WTC11 (cell line): ENCODE measurements at regions of chr12 and their contacts with region 1.

Region 1: DNA sequence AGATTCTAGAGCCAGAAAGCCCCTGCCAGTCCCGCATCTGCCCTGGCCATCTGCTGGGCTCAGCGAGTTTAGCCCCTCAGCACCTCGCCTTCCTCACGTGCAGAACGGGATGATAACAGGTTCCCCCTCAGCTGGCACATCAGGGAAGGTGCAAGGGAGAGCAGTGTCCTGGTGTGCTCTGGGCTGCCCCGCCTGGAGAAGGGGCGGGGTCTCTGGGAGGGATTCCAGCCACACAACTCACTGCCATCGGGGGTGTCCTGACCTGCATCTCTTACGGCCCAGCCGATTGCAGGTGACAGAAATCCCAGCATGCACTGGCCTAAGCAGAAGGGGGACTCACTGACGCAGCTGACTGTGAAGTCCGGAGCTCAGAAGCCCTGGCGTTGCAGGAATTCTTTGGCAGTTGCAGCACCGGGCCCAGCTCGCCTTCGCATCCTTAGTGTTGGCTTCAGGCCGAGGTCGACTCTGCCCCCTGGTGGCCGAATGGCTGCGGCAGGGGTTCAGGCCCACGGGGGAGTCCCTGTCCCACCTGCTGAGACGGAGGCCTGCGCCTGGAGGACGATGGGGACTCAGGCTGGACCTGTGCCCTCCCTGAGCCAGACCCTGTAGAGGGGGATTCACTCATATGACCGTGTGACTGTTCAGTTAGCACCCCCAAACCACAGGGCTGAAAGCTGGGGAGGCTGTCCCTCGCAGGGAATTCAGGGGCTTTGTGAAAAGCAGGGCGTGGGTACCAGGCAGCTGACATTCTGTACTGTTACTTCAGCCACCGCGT is 178.6 kb downstream of the ADGRD1 start:
- DNase-seq: peak; percentile 94
- ATAC-seq: peak; percentile 88
- H3K4me3 Mint-ChIP-seq: peak overlapping the region; percentile 38; the same call in 1 of the 2 replicates
- H3K27ac Mint-ChIP-seq: no peak overlapping the region
- H3K4me1 Mint-ChIP-seq: no peaks in the 10 kb centered on the region
- H3K27me3 Mint-ChIP-seq: no peaks in the 10 kb centered on the region
- CTCF ChIP-seq: peak; percentile 88

Region 2: DNA sequence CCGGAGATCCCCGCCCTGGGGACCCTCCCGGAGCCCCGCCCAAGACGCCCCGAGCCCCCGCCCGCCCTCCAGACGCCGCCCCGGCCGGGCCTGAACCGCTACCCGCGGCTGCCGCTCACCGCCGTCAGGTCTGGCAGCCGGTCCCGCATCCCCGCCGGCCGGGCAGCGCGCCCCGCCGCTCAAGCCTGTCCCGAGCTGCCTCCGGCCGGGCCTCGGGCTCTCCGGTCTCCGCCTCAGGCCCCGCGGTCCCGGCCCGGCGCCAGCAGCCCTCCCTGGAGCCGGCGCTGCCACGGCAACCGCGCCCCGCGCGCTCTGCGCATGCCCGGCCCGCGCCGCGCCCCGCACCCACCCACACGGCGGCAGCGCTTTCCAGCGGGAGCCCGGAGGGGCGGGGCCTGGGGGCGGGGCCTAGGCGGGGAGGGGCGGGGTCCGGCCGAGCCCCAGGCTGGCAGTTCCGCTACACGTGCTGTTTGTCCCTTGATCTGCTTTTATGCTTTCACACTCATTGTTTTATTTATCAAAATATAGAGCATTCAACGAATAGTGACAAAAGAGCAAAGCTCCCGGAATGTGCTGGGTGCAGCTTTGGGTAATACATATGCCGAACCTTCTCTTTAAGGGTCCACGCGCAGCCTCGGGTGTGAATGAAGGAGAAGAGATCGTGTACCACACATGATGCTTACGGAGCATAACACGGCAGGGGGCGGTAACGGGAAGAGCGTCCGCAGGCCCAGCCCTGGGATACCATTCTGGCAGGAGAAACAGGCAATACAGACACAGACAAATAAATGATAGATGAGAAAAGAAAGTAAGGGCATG is 293.1 kb before region 1 on chr12 and contains the start of gene STX2:
- CTCF ChIA-PET with region 1: no interaction called
- POLR2A ChIA-PET with region 1: no interaction called
- DNase-seq: peak; percentile 78
- ATAC-seq: peak; percentile 79
- H3K4me3 Mint-ChIP-seq: peak within 1 kb of the TSS; percentile 86
- H3K27ac Mint-ChIP-seq: no peak within 1 kb of the TSS
- H3K4me1 Mint-ChIP-seq: peaks cover 45% of the 10 kb centered on the region
- H3K27me3 Mint-ChIP-seq: peaks cover 24% of the 10 kb centered on the region
- CTCF ChIP-seq: no peak
- total RNA-seq, gene STX2: 21.1 to 23.2 TPM (median 22.7 TPM) in 3 replicates

Region 3: GRCh38 chr12:131104463-131105350 is 27.6 kb before region 1 on chr12:
- CTCF ChIA-PET with region 1: interaction called, 88 read pairs
- POLR2A ChIA-PET with region 1: no interaction called
- DNase-seq: peak; percentile 94
- ATAC-seq: peak; percentile 96
- H3K4me3 Mint-ChIP-seq: no peak overlapping the region
- H3K27ac Mint-ChIP-seq: no peak overlapping the region
- H3K4me1 Mint-ChIP-seq: no peaks in the 10 kb centered on the region
- H3K27me3 Mint-ChIP-seq: no peaks in the 10 kb centered on the region; the same call in 1 of the 2 replicates
- CTCF ChIP-seq: peak; percentile 87

Region 4: GRCh38 chr12:131121705-131122405 is 10.4 kb before region 1 on chr12:
- CTCF ChIA-PET with region 1: interaction called, 79 read pairs
- POLR2A ChIA-PET with region 1: no interaction called
- DNase-seq: no peak
- ATAC-seq: peak; percentile 20; the same call in 1 of the 2 replicates
- H3K4me3 Mint-ChIP-seq: no peak overlapping the region
- H3K27ac Mint-ChIP-seq: no peak overlapping the region
- H3K4me1 Mint-ChIP-seq: no peaks in the 10 kb centered on the region
- H3K27me3 Mint-ChIP-seq: no peaks in the 10 kb centered on the region
- CTCF ChIP-seq: no peak

Region 5: DNA sequence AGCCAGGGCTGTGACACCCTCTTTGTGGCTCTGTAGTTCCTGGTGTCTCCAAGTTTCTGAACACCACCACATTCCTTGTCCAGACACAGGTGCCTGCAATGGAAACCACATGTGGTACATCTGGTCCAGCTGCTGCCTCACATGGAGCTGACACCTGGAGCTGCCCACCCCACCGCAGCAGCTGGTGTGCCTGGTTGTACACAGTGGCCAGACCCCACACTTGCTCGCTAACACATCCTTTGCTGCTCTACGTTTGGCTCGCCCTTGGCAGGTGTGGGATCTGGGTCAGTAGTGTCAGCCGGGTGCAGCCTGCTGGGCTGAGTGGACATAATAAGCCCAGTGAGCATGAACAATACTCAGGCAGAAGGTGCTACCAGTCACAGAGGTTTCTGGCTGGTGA is 20.3 kb after region 1 on chr12:
- CTCF ChIA-PET with region 1: interaction called, 11 read pairs
- POLR2A ChIA-PET with region 1: no interaction called
- DNase-seq: no peak
- ATAC-seq: no peak
- H3K4me3 Mint-ChIP-seq: no peak overlapping the region
- H3K27ac Mint-ChIP-seq: no peak overlapping the region
- H3K4me1 Mint-ChIP-seq: no peaks in the 10 kb centered on the region
- H3K27me3 Mint-ChIP-seq: 0 out of 2 replicates have a peak, but pooled peaks cover 3% of the 10 kb centered on the region
- CTCF ChIP-seq: no peak

Region 6: DNA sequence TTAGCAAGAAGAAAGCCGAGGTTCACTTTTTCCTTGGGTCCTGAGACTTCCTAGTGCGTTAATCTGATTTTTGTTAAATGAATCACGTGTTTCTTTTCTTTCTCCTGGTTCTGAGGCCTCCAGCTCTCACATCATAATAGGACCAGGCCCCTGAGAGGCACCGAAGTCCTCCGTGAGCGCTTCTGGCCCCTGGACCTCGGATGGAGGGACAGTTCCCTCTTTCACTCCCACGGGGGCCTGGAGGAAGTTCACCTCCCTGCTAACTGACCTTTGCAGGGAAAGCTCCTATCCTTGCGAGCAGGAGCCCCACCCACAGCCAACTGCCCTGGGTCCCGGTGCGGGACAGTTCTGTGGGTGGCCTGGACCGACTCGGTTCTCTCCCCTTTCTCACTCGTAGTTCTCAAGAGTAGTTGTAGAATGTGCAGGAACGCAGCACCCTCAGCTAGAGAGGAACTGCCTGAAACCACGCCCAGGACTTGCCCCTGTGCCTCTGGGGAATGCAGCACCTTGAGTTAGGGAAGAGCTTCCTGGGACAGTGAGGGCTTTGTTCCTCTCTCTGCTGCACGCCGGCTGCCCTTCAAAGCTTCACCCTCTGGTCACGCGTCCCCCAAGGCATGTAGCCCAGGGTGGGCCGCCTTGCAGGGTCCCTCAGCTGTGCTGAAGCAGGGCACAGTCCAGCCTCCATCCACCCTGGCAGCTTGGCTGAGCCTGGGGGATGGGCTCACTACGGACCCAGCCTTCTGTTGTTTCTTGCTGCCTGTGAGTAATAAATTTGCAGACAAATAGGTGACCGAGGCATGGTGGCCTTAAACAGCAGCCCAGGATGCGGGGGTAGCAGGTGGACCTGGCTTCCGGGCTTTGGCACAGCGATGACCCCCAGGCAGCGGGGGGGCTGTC is 86.0 kb after region 1 on chr12:
- CTCF ChIA-PET with region 1: interaction called, 10 read pairs
- POLR2A ChIA-PET with region 1: no interaction called
- DNase-seq: peak; percentile 51
- ATAC-seq: peak; percentile 84
- H3K4me3 Mint-ChIP-seq: 0 out of 2 replicates have a peak overlapping the region, but pooled peaks have one; percentile 6
- H3K27ac Mint-ChIP-seq: peak overlapping the region; percentile 61
- H3K4me1 Mint-ChIP-seq: peaks cover 28% of the 10 kb centered on the region
- H3K27me3 Mint-ChIP-seq: no peaks in the 10 kb centered on the region
- CTCF ChIP-seq: no peak

Region 7: DNA sequence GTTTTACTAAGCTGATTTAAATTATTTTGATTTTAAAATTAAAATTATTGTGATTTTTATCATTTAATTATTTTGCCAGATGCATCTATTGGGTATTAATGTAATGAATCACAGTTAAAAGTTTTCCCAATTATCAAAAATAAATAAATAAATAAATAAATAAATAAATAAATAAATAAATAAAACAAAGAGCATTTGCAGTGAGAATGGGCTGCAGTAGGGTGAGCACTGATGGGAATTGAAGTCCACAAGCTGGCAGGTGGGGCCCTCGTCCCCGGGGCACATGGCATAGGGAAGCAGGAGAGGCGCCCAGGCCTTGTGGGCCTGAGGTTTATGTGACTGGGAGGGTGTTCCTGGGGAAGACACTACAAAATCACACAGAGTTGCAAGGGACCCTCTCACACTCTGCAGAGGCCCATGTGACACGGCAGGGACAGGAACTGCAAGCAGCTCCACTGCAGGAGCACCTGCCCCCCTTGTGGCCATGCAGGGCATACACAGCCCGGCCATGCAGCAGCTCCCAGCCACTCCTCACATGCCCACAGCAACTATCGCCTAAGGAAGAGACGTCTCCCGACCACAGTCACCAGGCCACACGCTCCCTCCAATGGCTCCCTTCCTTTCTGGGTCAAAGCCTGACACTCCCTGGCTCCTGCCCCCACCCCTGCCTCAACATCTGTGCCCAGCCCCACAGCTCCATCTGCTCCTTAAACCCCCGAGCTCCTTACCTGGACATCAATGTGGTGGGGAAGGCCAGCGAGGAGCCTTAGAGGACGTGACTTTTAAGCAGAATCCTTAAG is 322.3 kb after region 1 on chr12:
- CTCF ChIA-PET with region 1: interaction called, 25 read pairs
- POLR2A ChIA-PET with region 1: no interaction called
- DNase-seq: peak; percentile 82
- ATAC-seq: peak; percentile 89
- H3K4me3 Mint-ChIP-seq: no peak overlapping the region
- H3K27ac Mint-ChIP-seq: no peak overlapping the region
- H3K4me1 Mint-ChIP-seq: peaks cover 15% of the 10 kb centered on the region; the same call in 1 of the 2 replicates
- H3K27me3 Mint-ChIP-seq: no peaks in the 10 kb centered on the region
- CTCF ChIP-seq: peak; percentile 85